AG04450 (cell line): ENCODE measurements at regions of chr1 and their contacts with region 1.

Region 1: GRCh38 chr1:153705485-153705884 is 22.4 kb upstream of the INTS3 start:
- DNase-seq: no peak
- H3K4me3 ChIP-seq: no peak overlapping the region
- H3K27ac ChIP-seq: no peak overlapping the region
- H3K27me3 ChIP-seq: no peaks in the 10 kb centered on the region
- CTCF ChIP-seq: no peak

Region 2: GRCh38 chr1:153617675-153618074 is 87.8 kb before region 1 on chr1:
- CTCF ChIA-PET with region 1: no interaction called
- POLR2A ChIA-PET with region 1: no interaction called
- DNase-seq: no peak
- H3K4me3 ChIP-seq: no peak overlapping the region
- H3K27ac ChIP-seq: no peak overlapping the region
- H3K27me3 ChIP-seq: no peaks in the 10 kb centered on the region
- CTCF ChIP-seq: peak; percentile 61

Region 3: GRCh38 chr1:153827168-153827964 is 121.9 kb after region 1 on chr1:
- CTCF ChIA-PET with region 1: no interaction called
- POLR2A ChIA-PET with region 1: no interaction called
- DNase-seq: no peak
- H3K4me3 ChIP-seq: no peak overlapping the region
- H3K27ac ChIP-seq: no peak overlapping the region
- H3K27me3 ChIP-seq: no peaks in the 10 kb centered on the region
- CTCF ChIP-seq: no peak

Region 4: GRCh38 chr1:153866045-153866850 is 160.8 kb after region 1 on chr1:
- CTCF ChIA-PET with region 1: no interaction called
- POLR2A ChIA-PET with region 1: no interaction called
- DNase-seq: peak; percentile 26
- H3K4me3 ChIP-seq: no peak overlapping the region
- H3K27ac ChIP-seq: no peak overlapping the region
- H3K27me3 ChIP-seq: no peaks in the 10 kb centered on the region
- CTCF ChIP-seq: no peak

Region 5: GRCh38 chr1:153967082-153968000 is 261.9 kb after region 1 on chr1 and contains the start of gene CREB3L4:
- CTCF ChIA-PET with region 1: interaction called, 12 read pairs
- POLR2A ChIA-PET with region 1: no interaction called
- DNase-seq: peak; percentile 93
- H3K4me3 ChIP-seq: peak within 1 kb of the TSS; percentile 75
- H3K27ac ChIP-seq: peak within 1 kb of the TSS; percentile 86
- H3K27me3 ChIP-seq: no peaks in the 10 kb centered on the region
- CTCF ChIP-seq: peak; percentile 49
- polyA plus RNA-seq, gene CREB3L4: 7.7 and 10.0 TPM in 2 replicates